Endothelial cell of umbilical vein (primary cell): ENCODE measurements at regions of chr3 and their contacts with region 1.

Region 1: DNA sequence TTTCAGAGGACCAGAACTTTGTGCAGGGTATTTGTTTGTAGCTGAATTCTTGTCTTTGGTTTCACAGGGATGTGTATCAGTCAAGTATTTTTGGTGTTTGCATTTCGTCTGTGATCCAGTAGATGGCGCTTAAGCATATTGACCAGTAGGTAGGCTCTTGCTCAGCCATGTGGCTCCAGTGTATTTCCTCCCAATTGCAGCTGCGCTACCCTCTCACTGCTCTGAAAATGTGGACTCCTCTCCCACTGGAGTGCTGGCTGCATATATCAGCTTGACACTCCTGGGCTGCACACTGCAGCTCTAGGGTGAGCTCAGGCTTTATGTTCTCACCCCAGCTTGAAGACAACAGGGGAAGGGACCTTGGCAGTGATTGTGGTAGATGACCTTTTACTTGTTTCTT is 1264.3 kb upstream of the ALCAM start:
- DNase-seq: peak; percentile 60
- H3K4me3 ChIP-seq: no peak overlapping the region
- H3K27ac ChIP-seq: no peak overlapping the region
- H3K4me1 ChIP-seq: no peaks in the 10 kb centered on the region
- H3K27me3 ChIP-seq: peaks cover 2 to 9% of the 10 kb centered on the region in 2 experiments
- CTCF ChIP-seq: peak; percentile 58 to 68
- POLR2A ChIP-seq: no peak

Region 2: DNA sequence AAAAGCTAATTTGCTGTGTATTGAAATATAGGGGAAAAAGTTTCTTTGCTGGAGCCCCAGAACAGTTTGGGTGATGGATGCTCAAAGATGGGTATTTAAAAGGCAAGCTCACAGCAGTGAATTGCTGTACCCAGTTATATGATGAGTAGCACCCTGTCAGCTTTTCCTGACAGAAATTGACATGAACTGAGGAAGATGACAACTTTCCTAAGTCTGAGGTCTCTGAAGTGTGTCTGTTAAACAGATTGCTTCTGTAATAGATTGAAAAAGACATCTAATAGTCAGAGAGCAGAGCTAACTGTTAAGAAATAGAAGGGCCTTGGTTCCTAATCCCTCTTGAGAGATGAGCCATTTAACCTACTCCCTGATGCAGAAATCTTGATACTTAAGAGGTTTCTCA is 13.6 kb before region 1 on chr3:
- CTCF ChIA-PET with region 1: interaction called, 10 read pairs
- POLR2A ChIA-PET with region 1: no interaction called
- dilution Hi-C with region 1: no loop called
- intact Hi-C with region 1: no loop called
- DNase-seq: no peak
- H3K4me3 ChIP-seq: no peak overlapping the region
- H3K27ac ChIP-seq: no peak overlapping the region
- H3K4me1 ChIP-seq: no peaks in the 10 kb centered on the region
- H3K27me3 ChIP-seq: no peaks in the 10 kb centered on the region
- CTCF ChIP-seq: no peak
- POLR2A ChIP-seq: no peak

Region 3: DNA sequence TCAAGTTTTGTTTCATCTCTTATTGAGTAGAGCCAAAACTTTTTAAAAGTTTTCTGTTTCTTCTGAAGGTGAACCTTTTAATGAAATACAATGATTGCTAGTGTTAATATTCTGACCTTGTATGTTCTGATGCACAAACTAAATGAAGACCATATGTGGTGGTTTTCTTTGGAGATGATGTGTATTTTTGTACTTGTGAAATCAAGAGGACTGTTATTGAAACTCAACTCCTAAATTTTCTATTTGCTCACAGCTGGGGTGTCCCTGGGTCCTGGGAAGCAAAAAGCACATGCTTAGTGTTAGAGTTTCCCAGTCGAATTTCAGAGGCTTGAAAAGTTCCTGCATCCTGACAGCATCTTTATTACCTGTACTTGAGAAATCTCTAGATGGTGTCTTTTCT is 78.5 kb after region 1 on chr3:
- CTCF ChIA-PET with region 1: no interaction called
- POLR2A ChIA-PET with region 1: no interaction called
- dilution Hi-C with region 1: no loop called
- intact Hi-C with region 1: no loop called
- DNase-seq: no peak
- H3K4me3 ChIP-seq: no peak overlapping the region
- H3K27ac ChIP-seq: no peak overlapping the region
- H3K4me1 ChIP-seq: no peaks in the 10 kb centered on the region
- H3K27me3 ChIP-seq: no peaks in the 10 kb centered on the region
- CTCF ChIP-seq: no peak
- POLR2A ChIP-seq: no peak